CD4-positive, alpha-beta T cell (primary cell): ENCODE measurements at regions of chr12 and their contacts with region 1.

Region 1: DNA sequence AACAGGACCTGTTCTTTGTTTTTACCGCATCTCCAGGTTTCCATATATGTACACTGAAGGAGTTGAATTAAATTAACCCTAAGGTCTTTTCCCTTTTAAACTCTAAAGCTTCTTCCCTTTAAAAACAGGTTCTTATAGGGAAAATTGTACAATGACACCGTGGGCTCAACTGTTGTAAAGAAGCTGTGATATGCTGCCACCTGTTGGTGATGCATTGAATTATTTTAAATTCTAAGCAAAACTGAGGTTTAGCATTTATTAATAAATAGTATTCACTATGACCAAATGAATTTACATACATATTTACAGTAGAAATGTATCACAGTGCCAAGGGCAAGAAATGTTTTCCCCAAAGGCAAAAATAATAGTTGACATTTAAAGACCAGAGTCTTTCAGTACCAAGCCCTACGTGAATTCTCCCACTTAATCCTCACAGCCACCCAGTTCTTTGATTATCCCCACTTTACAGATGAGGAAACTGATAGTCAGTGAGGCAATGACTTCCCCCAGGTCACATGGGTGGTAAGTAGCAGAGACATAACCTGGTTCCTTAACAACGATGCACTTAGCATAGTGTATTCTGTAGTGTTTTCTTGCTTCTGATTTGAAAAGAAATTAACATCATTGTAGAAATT is 35.7 kb upstream of the TMEM263 start:
- DNase-seq: peak in 5 of 14 experiments; percentile 7 to 72 (median 53)
- ATAC-seq: no peak
- H3K4me3 ChIP-seq: no peak overlapping the region
- H3K4me3 Mint-ChIP-seq: no peak overlapping the region
- H3K27ac ChIP-seq: no peak overlapping the region
- H3K27ac Mint-ChIP-seq: no peak overlapping the region
- H3K4me1 ChIP-seq: peaks cover 6% of the 10 kb centered on the region
- H3K4me1 Mint-ChIP-seq: peaks cover 9% of the 10 kb centered on the region
- H3K27me3 ChIP-seq: no peaks in the 10 kb centered on the region
- H3K27me3 Mint-ChIP-seq: peaks cover 14% of the 10 kb centered on the region
- CTCF ChIP-seq: peak; percentile 81

Region 2: DNA sequence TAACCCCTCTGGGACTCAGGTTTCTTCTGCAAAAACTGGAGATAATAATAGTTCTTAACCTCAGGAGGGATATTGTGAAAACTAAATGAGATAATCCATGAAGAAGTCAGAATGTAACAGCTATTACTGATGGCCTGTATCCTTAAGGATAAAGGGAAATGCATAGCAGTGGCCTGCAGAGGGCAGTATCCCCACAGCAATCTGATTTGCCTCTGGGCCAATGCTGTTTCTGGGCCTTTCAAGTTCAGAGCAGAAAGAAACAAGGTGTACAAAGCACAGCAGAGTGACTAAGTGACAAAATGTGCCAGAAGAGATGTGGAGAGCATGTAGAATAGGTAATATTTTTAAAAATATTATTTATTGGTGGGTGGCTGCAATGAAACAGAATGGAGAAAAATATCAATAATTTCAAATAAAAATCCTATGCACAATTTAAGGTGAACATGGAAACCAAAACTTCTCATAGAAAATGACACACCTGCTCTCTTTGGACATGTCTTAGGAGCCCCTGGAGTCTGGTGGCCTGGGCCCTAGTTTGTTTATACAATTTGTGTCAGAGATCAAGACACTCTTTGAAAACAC is 1499.3 kb before region 1 on chr12:
- CTCF ChIA-PET with region 1: no interaction called
- POLR2A ChIA-PET with region 1: no interaction called
- intact Hi-C with region 1: loop called in 1 of 2 experiments (anchors 10 kb)
- DNase-seq: peak; percentile 26 to 71 (median 44)
- ATAC-seq: peak; percentile 55
- H3K4me3 ChIP-seq: no peak overlapping the region
- H3K4me3 Mint-ChIP-seq: no peak overlapping the region
- H3K27ac ChIP-seq: no peak overlapping the region
- H3K27ac Mint-ChIP-seq: no peak overlapping the region
- H3K4me1 ChIP-seq: no peaks in the 10 kb centered on the region
- H3K4me1 Mint-ChIP-seq: no peaks in the 10 kb centered on the region
- H3K27me3 ChIP-seq: no peaks in the 10 kb centered on the region
- H3K27me3 Mint-ChIP-seq: peaks cover under 1% of the 10 kb centered on the region
- CTCF ChIP-seq: peak; percentile 88

Region 3: DNA sequence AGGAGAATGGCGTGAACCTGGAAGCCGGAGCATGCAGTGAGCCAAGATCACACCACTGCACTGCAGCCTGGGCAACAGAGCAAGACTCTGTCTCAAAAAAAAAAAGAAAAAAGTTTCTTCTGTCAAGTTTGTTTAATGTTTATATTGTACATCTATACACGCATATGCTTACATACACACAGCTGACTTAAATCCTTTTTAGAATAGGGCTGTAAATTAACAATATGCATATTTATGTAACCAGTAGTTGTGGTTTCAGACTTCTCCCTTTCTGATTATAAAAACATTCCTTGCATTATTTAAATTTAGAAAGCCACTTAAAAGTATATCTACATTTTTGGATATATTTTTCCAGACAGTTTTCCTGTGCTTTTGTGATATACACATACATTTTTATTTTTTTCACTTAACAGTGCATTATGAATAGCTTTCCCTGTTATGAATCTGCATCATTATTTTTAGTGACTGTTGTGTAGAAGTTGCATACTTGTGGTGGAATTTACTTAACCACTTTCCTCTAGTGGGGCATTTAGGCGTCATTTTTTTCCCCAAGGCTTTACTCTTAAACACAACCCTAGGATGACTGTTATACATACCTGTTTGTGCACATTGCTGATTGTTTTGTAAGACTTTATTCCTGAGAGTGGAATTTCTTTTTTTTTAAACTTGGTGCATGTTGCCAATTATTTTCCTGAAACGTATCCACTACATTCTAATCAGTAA is 533.1 kb before region 1 on chr12:
- CTCF ChIA-PET with region 1: no interaction called
- POLR2A ChIA-PET with region 1: no interaction called
- intact Hi-C with region 1: loop called (anchors 1 kb)
- DNase-seq: no peak
- ATAC-seq: no peak
- H3K4me3 ChIP-seq: no peak overlapping the region
- H3K4me3 Mint-ChIP-seq: no peak overlapping the region
- H3K27ac ChIP-seq: no peak overlapping the region
- H3K27ac Mint-ChIP-seq: no peak overlapping the region
- H3K4me1 ChIP-seq: peaks cover 3% of the 10 kb centered on the region
- H3K4me1 Mint-ChIP-seq: no peaks in the 10 kb centered on the region
- H3K27me3 ChIP-seq: no peaks in the 10 kb centered on the region
- H3K27me3 Mint-ChIP-seq: no peaks in the 10 kb centered on the region
- CTCF ChIP-seq: no peak

Region 4: GRCh38 chr12:106736051-106736957 is 183.7 kb before region 1 on chr12:
- CTCF ChIA-PET with region 1: interaction called, 4 read pairs
- POLR2A ChIA-PET with region 1: no interaction called
- intact Hi-C with region 1: loop called (anchors 2 to 5 kb)
- DNase-seq: peak in 6 of 14 experiments; percentile 9 to 69 (median 54)
- ATAC-seq: peak; percentile 55
- H3K4me3 ChIP-seq: no peak overlapping the region
- H3K4me3 Mint-ChIP-seq: no peak overlapping the region
- H3K27ac ChIP-seq: no peak overlapping the region
- H3K27ac Mint-ChIP-seq: no peak overlapping the region
- H3K4me1 ChIP-seq: no peaks in the 10 kb centered on the region
- H3K4me1 Mint-ChIP-seq: peaks cover 6% of the 10 kb centered on the region
- H3K27me3 ChIP-seq: no peaks in the 10 kb centered on the region
- H3K27me3 Mint-ChIP-seq: no peaks in the 10 kb centered on the region
- CTCF ChIP-seq: no peak

Region 5: GRCh38 chr12:106841510-106842302 is 78.3 kb before region 1 on chr12:
- CTCF ChIA-PET with region 1: no interaction called
- POLR2A ChIA-PET with region 1: no interaction called
- intact Hi-C with region 1: loop called in 1 of 2 experiments (anchors 5 kb)
- DNase-seq: peak in 12 of 14 experiments; percentile 2 to 68 (median 18)
- ATAC-seq: no peak
- H3K4me3 ChIP-seq: no peak overlapping the region
- H3K4me3 Mint-ChIP-seq: no peak overlapping the region
- H3K27ac ChIP-seq: no peak overlapping the region
- H3K27ac Mint-ChIP-seq: peak overlapping the region; percentile 15
- H3K4me1 ChIP-seq: no peaks in the 10 kb centered on the region
- H3K4me1 Mint-ChIP-seq: peaks cover 25% of the 10 kb centered on the region
- H3K27me3 ChIP-seq: no peaks in the 10 kb centered on the region
- H3K27me3 Mint-ChIP-seq: no peaks in the 10 kb centered on the region
- CTCF ChIP-seq: peak; percentile 68

Region 6: GRCh38 chr12:107670999-107671643 is 751.1 kb after region 1 on chr12:
- CTCF ChIA-PET with region 1: no interaction called
- POLR2A ChIA-PET with region 1: no interaction called
- intact Hi-C with region 1: no loop called
- DNase-seq: peak in 7 of 14 experiments; percentile 6 to 60 (median 23)
- ATAC-seq: no peak
- H3K4me3 ChIP-seq: no peak overlapping the region
- H3K4me3 Mint-ChIP-seq: no peak overlapping the region
- H3K27ac ChIP-seq: no peak overlapping the region
- H3K27ac Mint-ChIP-seq: no peak overlapping the region
- H3K4me1 ChIP-seq: no peaks in the 10 kb centered on the region
- H3K4me1 Mint-ChIP-seq: peaks cover 6% of the 10 kb centered on the region
- H3K27me3 ChIP-seq: no peaks in the 10 kb centered on the region
- H3K27me3 Mint-ChIP-seq: peaks cover 24% of the 10 kb centered on the region
- CTCF ChIP-seq: peak; percentile 43